Activated naive CD4-positive, alpha-beta T cell treated with anti-CD3 and anti-CD28 coated beads, Interleukin-2, amount 10 ng/mL, durations not matched to agents 7 days and 5 days (primary cell): ENCODE measurements at regions of chr6 and their contacts with region 1.

Region 1: GRCh38 chr6:104771258-104771832 is 88.4 kb downstream of the HACE1 start:
- DNase-seq: no peak
- H3K4me3 Mint-ChIP-seq: no peak overlapping the region
- H3K27ac Mint-ChIP-seq: no peak overlapping the region
- H3K4me1 Mint-ChIP-seq: peaks cover 8% of the 10 kb centered on the region
- H3K27me3 Mint-ChIP-seq: no peaks in the 10 kb centered on the region

Region 2: DNA sequence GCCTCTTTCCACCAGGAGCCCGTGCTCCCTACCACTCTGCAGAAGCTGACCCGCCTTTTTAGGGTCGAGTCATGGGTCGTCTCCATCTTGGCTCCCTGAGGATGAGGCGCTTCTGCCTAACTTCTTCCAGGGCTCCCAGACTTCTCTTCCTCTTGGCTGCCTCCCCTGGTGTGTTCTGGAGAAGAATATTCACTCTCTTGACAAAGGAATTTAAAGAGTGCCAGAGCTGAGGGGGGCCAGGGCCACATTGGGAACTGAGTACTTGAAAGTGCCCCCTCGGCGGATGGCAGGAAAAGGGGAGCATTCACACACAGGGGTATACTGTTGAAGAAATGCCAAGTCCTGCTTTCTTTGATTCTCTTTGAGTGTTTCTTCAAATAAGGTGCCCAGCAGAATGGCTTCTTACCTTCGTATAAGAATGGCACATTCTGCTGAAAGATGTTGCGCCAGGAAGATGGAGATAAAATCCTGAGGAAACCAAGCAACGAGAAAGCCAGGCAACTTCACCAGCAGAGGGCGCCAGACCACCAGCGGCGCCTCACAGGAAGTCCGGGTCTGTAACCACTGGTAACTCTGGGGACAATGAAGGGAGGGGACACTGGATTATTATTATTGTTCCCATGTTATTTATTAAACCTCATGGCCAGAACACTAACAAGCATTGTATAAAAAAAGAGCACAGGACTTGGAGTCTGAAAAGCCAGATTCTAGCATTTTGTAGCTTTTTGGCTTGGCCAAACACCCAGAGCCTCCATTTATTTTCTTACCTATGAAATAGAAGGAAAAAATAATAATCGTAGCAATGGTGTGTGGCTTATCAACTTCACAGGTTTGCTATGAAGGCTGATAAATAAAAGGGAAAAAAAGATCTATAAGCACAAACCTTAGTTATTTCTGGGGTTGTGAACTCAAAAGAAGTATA is 88.4 kb before region 1 on chr6:
- CTCF ChIA-PET with region 1: interaction called, 33 read pairs
- DNase-seq: peak; percentile 77
- H3K4me3 Mint-ChIP-seq: no peak overlapping the region
- H3K27ac Mint-ChIP-seq: no peak overlapping the region
- H3K4me1 Mint-ChIP-seq: peaks cover 17% of the 10 kb centered on the region
- H3K27me3 Mint-ChIP-seq: peaks cover 6% of the 10 kb centered on the region

Region 3: DNA sequence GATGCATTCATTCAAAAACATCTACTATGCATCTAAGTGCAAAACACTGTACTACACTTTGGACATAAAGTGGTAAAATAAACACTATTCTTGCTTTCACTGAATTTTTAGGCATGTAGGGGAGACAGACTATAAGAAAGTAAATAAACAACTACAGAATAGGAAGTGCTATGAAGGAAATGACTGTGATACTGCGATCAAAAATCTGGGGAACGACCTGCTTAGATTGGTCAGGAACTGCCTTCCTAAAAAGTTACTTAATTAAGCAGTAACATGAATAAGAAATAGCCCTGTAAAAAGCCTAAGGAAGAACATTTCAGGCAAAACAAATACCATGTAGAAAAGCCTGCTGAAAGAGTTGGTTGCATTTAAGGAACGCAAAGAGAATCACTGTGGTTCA is 37.8 kb after region 1 on chr6:
- CTCF ChIA-PET with region 1: no interaction called
- DNase-seq: no peak
- H3K4me3 Mint-ChIP-seq: no peak overlapping the region
- H3K27ac Mint-ChIP-seq: no peak overlapping the region
- H3K4me1 Mint-ChIP-seq: no peaks in the 10 kb centered on the region
- H3K27me3 Mint-ChIP-seq: no peaks in the 10 kb centered on the region

Region 4: GRCh38 chr6:104955927-104956730 is 184.8 kb after region 1 on chr6:
- CTCF ChIA-PET with region 1: no interaction called
- DNase-seq: no peak
- H3K4me3 Mint-ChIP-seq: no peak overlapping the region
- H3K27ac Mint-ChIP-seq: no peak overlapping the region
- H3K4me1 Mint-ChIP-seq: peaks cover 18% of the 10 kb centered on the region
- H3K27me3 Mint-ChIP-seq: peaks cover 68% of the 10 kb centered on the region